ENCODE measurements at regions of chr3 and their contacts with region 1.

Region 1: DNA sequence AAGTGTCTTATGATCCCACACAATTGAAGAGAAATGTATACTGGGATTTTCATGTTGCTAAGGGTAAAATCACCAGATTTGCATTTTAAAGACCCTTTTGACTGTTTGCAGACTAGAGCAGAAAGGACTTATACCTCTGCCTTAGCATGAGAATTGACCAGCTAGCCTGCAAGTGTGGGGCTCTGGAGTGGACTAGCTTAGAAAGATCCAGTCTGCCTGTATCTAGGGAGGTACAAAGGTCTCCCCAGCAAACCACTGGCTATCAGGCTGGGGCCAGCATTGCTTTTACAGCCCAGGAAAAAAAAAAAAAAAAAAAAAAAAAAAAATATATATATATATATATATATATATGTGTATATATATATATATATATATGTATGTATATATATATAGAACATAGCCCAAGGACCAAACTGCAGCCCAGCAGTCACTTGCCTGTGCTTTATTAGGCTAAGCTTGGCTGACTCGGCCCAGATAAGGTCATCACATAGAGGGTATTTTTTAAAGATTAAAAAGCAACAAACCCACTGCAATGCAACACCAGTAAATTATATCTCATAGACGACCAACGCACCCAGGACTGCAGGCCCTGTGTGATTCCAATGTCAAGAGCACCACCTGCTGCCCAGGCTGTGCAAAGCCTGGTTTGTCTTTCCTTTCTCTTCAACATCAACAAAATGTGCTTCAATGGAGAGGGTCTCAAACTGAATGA is 63.7 kb downstream of the DCLK3 start:
- DNase-seq: peak; percentile 50
- H3K4me3 ChIP-seq: no peak overlapping the region
- H3K27ac ChIP-seq: no peak overlapping the region
- H3K4me1 ChIP-seq: peaks cover 20% of the 10 kb centered on the region
- H3K27me3 ChIP-seq: no peaks in the 10 kb centered on the region
- CTCF ChIP-seq: peak; percentile 91 to 93

Region 2: GRCh38 chr3:36124118-36124796 is 576.4 kb before region 1 on chr3:
- CTCF ChIA-PET with region 1: no interaction called
- dilution Hi-C with region 1: no loop called
- in situ Hi-C with region 1: loop called (anchors 5 to 10 kb)
- intact Hi-C with region 1: loop called (anchors 1 kb)
- DNase-seq: peak; percentile 65
- H3K4me3 ChIP-seq: no peak overlapping the region
- H3K27ac ChIP-seq: no peak overlapping the region
- H3K4me1 ChIP-seq: no peaks in the 10 kb centered on the region
- H3K27me3 ChIP-seq: no peaks in the 10 kb centered on the region
- CTCF ChIP-seq: peak; percentile 92 to 96

Region 3: DNA sequence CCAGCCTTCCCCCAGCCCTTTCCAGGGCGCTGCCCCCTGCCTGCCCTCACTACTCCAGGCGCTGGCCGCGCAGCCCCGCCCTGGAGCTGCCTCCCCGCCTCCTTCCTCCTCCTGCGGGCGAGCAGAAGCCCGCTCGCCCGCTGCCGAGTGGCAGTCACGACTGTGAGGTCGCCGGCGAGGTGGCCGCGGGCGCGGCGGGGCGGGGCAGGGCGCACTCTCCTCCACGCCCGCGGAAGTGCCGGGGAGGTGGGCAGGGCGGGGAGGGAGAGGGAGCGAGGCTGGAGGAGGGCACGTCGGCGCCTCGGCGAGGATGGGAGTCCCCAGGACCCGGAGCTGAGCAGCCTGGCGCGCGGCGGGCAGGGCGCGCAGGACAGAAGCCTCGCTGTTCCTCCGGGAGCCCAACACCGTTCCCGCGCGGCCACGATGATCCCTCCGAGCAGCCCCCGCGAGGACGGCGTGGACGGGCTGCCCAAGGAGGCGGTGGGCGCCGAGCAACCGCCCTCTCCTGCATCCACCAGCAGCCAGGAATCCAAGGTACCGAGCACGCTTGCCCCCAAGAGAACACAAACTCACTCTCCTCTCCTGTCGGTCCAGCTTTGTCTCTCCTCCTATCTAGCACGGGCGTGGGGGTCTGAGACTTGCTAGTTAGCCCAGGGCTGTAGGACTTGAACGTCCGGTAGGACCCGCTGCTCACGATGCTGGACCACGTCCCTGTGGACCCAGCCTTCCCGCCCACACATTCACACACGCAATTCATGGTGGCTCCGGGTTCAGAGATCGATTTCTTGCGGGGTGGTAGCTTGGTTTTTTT is 320.3 kb before region 1 on chr3 and contains the start of gene STAC:
- CTCF ChIA-PET with region 1: no interaction called
- dilution Hi-C with region 1: no loop called
- in situ Hi-C with region 1: no loop called
- intact Hi-C with region 1: loop called (anchors 5 kb)
- DNase-seq: peak; percentile 60
- H3K4me3 ChIP-seq: peak within 1 kb of the TSS; percentile 75 to 97 (median 81)
- H3K27ac ChIP-seq: peak within 1 kb of the TSS; percentile 5
- H3K4me1 ChIP-seq: peaks cover 12% of the 10 kb centered on the region
- H3K27me3 ChIP-seq: no peaks in the 10 kb centered on the region
- CTCF ChIP-seq: no peak
- total RNA-seq, gene STAC: 19.3 to 25.3 TPM

Region 4: GRCh38 chr3:36591959-36592358 is 108.7 kb before region 1 on chr3:
- CTCF ChIA-PET with region 1: no interaction called
- dilution Hi-C with region 1: no loop called
- in situ Hi-C with region 1: loop called (anchors 5 to 10 kb)
- intact Hi-C with region 1: loop called (anchors 1 kb)
- DNase-seq: peak; percentile 16
- H3K4me3 ChIP-seq: no peak overlapping the region
- H3K27ac ChIP-seq: no peak overlapping the region
- H3K4me1 ChIP-seq: no peaks in the 10 kb centered on the region
- H3K27me3 ChIP-seq: no peaks in the 10 kb centered on the region
- CTCF ChIP-seq: peak in 1 of 2 donors; percentile 59

Region 5: GRCh38 chr3:36648241-36649034 is 52.3 kb before region 1 on chr3:
- CTCF ChIA-PET with region 1: no interaction called
- dilution Hi-C with region 1: no loop called
- in situ Hi-C with region 1: no loop called
- intact Hi-C with region 1: loop called (anchors 1 kb)
- DNase-seq: peak; percentile 85
- H3K4me3 ChIP-seq: no peak overlapping the region
- H3K27ac ChIP-seq: no peak overlapping the region
- H3K4me1 ChIP-seq: peaks cover 18% of the 10 kb centered on the region
- H3K27me3 ChIP-seq: no peaks in the 10 kb centered on the region
- CTCF ChIP-seq: no peak

Region 6: GRCh38 chr3:36957862-36958686 is 257.4 kb after region 1 on chr3:
- CTCF ChIA-PET with region 1: no interaction called
- dilution Hi-C with region 1: no loop called
- in situ Hi-C with region 1: no loop called
- intact Hi-C with region 1: no loop called
- DNase-seq: peak; percentile 95
- H3K4me3 ChIP-seq: peak overlapping the region; percentile 17 to 45 (median 32)
- H3K27ac ChIP-seq: peak overlapping the region; percentile 99
- H3K4me1 ChIP-seq: peaks cover 17% of the 10 kb centered on the region
- H3K27me3 ChIP-seq: no peaks in the 10 kb centered on the region
- CTCF ChIP-seq: no peak

Measured in mammary epithelial cell (primary cell).